Activated B cell treated with CpG ODN at 0.5 μM for 24 hours (primary cell): ENCODE measurements at regions of chr1 and their contacts with region 1.

Region 1: GRCh38 chr1:155277070-155277895 is at the start of gene HCN3:
- DNase-seq: peak; percentile 93
- ATAC-seq: peak; percentile 72
- H3K4me3 Mint-ChIP-seq: peak within 1 kb of the TSS; percentile 79
- H3K27ac Mint-ChIP-seq: no peak within 1 kb of the TSS
- H3K4me1 Mint-ChIP-seq: peaks cover 36% of the 10 kb centered on the region
- H3K27me3 Mint-ChIP-seq: no peaks in the 10 kb centered on the region
- CTCF ChIP-seq: no peak
- total RNA-seq, gene HCN3: 2.7 TPM in 2 replicates

Region 2: DNA sequence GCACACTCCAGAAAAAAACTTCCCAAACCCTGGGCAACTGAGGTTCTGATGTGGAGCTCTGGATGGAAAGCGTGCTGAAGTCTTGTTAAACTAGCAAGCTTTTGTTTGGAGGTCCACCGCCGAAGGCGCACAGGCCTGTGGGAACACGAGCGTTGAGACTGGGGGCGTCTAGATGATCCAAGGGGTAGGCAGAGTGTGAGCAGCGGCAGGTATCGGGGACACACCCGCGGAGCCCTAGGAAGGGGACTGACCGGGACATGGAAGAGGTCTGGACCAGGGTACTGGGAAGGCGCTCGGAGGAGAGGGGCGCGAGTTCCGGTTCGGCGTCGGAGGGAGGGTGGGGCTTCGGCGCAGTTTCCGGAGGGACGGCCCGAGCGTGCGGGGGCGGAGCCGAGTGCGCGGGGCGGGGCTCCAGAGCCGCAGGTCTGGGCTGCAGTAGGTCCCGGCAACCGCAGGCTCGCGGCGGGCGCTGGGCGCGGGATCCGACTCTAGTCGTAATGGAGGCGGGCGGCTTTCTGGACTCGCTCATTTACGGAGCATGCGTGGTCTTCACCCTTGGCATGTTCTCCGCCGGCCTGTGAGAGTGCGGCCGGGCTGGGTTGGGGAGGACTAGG is 141.8 kb before region 1 on chr1 and contains the start of gene SLC50A1:
- CTCF ChIA-PET with region 1: no interaction called
- POLR2A ChIA-PET with region 1: interaction called, 10 read pairs
- intact Hi-C with region 1: no loop called
- DNase-seq: peak; percentile 94
- ATAC-seq: peak; percentile 86
- H3K4me3 Mint-ChIP-seq: peak within 1 kb of the TSS; percentile 96
- H3K27ac Mint-ChIP-seq: peak within 1 kb of the TSS; percentile 99
- H3K4me1 Mint-ChIP-seq: peaks cover 46% of the 10 kb centered on the region
- H3K27me3 Mint-ChIP-seq: peaks cover 3% of the 10 kb centered on the region
- CTCF ChIP-seq: no peak
- total RNA-seq, gene SLC50A1: 77.3 and 85.2 TPM in 2 replicates

Region 3: GRCh38 chr1:155227261-155228095 is 49.8 kb before region 1 on chr1:
- CTCF ChIA-PET with region 1: no interaction called
- POLR2A ChIA-PET with region 1: interaction called, 8 read pairs
- intact Hi-C with region 1: loop called (anchors 1 kb)
- DNase-seq: peak; percentile 90
- ATAC-seq: peak; percentile 96
- H3K4me3 Mint-ChIP-seq: peak overlapping the region; percentile 88
- H3K27ac Mint-ChIP-seq: peak overlapping the region; percentile 87
- H3K4me1 Mint-ChIP-seq: peaks cover 43% of the 10 kb centered on the region
- H3K27me3 Mint-ChIP-seq: no peaks in the 10 kb centered on the region
- CTCF ChIP-seq: no peak

Region 4: DNA sequence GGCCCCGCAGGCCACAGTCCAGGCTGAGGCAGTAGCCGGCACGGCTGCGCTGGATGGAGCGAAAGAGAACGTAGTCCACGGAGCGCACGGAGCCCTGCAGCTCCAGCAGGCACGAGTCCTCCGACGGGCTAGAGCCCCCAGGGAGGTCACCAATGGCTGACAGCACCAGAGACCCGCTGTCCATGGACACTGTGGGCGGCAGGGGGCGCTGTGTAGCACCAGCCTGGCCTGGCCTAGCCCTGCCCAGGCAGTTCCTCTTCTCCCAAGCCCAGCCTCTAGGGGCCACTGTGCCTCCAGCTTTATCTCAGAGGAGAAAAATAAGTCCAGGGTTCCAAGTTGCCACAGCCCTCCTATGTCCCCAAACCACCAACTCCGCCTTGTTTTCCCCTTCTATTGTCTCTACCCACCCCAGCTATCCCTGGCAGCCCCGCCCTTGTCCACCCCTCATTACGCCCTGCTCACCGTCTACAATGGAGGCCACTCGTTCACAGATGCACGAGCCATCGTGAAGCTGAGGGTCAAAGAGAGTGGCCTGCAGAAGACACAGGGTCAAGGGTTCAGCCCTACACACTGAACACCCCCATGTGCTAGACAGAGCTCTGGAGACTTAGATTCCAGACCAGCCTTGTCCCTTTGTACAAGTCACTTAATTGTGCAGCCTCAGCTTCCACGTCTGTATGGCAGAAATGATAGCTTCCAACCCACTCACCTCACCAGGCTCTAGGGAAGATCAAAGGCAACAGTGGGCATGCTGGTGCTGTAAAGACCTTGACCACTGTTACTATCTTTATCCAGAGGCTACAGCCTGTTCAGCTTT is 26.4 kb before region 1 on chr1:
- CTCF ChIA-PET with region 1: interaction called, 16 read pairs
- POLR2A ChIA-PET with region 1: interaction called, 31 read pairs
- intact Hi-C with region 1: loop called (anchors 2 kb)
- DNase-seq: peak; percentile 95
- ATAC-seq: peak; percentile 96
- H3K4me3 Mint-ChIP-seq: peak overlapping the region; percentile 73
- H3K27ac Mint-ChIP-seq: peak overlapping the region; percentile 39
- H3K4me1 Mint-ChIP-seq: peaks cover 29% of the 10 kb centered on the region
- H3K27me3 Mint-ChIP-seq: no peaks in the 10 kb centered on the region
- CTCF ChIP-seq: peak; percentile 84

Region 5: GRCh38 chr1:155308493-155309422 is 31.5 kb after region 1 on chr1 and contains the start of gene FDPS:
- CTCF ChIA-PET with region 1: interaction called, 5 read pairs
- POLR2A ChIA-PET with region 1: interaction called, 30 read pairs
- intact Hi-C with region 1: loop called (anchors 1 kb)
- DNase-seq: peak; percentile 87
- ATAC-seq: peak; percentile 97
- H3K4me3 Mint-ChIP-seq: peak within 1 kb of the TSS; percentile 94
- H3K27ac Mint-ChIP-seq: peak within 1 kb of the TSS; percentile 92
- H3K4me1 Mint-ChIP-seq: peaks cover 32% of the 10 kb centered on the region
- H3K27me3 Mint-ChIP-seq: no peaks in the 10 kb centered on the region
- CTCF ChIP-seq: no peak
- total RNA-seq, gene FDPS: 241 and 242 TPM in 2 replicates

Region 6: DNA sequence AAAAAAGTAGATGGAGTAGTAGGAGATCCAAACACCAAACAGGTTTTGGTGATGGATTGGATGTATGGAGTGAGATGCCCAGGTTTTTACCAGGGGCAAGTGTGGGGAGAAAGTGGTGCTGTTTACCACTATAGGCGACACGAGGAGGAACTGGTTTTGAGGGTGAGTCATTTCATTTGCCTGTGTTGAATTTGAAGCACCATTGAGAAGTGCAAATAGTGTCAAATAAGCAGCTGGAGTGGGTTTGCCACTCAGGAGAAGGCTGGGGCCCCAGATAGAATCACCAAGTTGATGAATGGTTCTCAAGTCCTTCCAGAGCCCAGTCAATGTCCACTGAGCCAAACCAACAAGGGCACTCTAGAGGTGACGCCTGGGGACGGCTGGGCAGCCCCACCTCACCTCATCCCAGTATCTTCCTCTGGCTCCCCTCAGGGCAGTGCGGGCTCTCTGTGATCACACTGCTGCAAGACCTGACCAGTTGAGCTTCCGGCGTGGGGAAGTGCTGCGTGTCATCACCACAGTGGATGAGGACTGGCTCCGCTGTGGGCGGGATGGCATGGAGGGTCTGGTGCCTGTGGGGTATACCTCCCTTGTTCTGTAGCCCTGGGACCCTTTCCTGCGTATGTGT is 52.8 kb after region 1 on chr1:
- CTCF ChIA-PET with region 1: no interaction called
- POLR2A ChIA-PET with region 1: interaction called, 11 read pairs
- intact Hi-C with region 1: no loop called
- DNase-seq: no peak
- ATAC-seq: peak; percentile 47
- H3K4me3 Mint-ChIP-seq: no peak overlapping the region
- H3K27ac Mint-ChIP-seq: no peak overlapping the region
- H3K4me1 Mint-ChIP-seq: peaks cover 5% of the 10 kb centered on the region
- H3K27me3 Mint-ChIP-seq: no peaks in the 10 kb centered on the region
- CTCF ChIP-seq: no peak

Region 7: DNA sequence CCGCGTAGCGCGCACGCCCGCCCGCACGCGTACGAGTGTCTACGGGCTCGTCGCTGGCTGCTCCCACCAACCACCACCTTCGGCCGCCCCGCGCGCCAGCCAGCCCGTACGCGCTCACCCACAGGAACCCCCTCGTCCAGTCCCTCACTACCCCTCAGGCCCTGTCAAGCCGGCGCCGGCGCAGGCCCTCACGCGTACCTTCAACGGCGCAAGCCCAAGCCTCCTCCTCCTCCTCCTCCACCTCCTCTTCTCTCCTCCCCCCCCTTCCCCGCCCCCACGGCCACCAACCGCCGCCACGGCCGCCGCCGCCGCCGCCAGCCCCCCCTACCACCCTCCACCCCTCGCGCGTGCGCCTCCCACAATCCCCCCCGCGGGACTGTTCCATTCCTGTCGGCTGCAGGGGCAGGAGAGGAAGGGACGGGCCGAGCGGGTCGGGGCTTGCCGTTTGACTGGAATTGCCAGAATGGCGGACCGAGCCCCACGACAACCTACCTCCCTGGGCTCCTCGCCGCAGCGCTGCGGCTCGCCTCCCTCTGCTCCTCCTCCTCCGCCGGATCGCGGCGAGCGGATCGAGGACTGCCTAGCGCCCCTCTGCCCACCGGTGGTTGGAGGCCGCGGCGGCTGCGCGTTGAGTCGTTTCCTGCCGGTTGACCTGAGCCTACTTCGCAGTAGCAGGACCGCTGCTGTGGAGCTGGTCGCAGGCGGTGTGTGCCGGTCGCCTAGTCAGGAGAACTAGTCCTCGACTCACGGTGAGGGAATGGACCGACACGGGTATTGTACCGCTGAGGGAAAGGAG is 285.5 kb after region 1 on chr1 and contains the start of gene ASH1L:
- CTCF ChIA-PET with region 1: no interaction called
- POLR2A ChIA-PET with region 1: interaction called, 5 read pairs
- intact Hi-C with region 1: loop called (anchors 10 kb)
- DNase-seq: peak; percentile 90
- ATAC-seq: peak; percentile 80
- H3K4me3 Mint-ChIP-seq: peak within 1 kb of the TSS; percentile 99
- H3K27ac Mint-ChIP-seq: peak within 1 kb of the TSS; percentile 98
- H3K4me1 Mint-ChIP-seq: peaks cover 41% of the 10 kb centered on the region
- H3K27me3 Mint-ChIP-seq: no peaks in the 10 kb centered on the region
- CTCF ChIP-seq: no peak
- total RNA-seq, gene ASH1L: 75.6 and 90.6 TPM in 2 replicates